Aorta (tissue), 5 donors: ENCODE measurements at regions of chr2 and their contacts with region 1.

Region 1: GRCh38 chr2:38720613-38721241 is 30.4 kb downstream of the SRSF7 start:
- DNase-seq: peak; percentile 76 to 85
- ATAC-seq: peak; percentile 88
- H3K4me3 ChIP-seq: no peak overlapping the region
- H3K27ac ChIP-seq: peak overlapping the region in 1 of 2 donors; percentile 19
- H3K4me1 ChIP-seq: no peaks in the 10 kb centered on the region
- H3K27me3 ChIP-seq: no peaks in the 10 kb centered on the region

Region 2: DNA sequence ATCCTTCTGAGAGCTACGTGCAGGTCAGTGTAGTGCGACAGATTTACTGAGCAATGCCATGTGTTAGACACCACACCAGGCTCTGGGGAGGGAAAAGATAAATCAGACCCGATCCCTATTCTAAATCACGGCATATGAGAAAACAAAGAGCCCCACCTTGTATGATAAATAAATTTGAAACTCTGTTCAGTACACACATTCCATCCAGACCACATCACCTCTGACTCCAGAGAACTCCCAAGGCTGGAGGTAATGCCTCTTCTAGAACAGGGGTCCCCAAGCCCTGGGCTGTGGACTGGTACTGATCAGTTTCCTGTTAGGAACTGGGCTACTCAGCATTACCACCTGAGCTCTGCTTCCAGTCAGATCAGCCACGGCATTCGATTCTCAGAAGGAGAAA is 1299.0 kb before region 1 on chr2:
- intact Hi-C with region 1: no loop called
- DNase-seq: no peak
- ATAC-seq: no peak
- H3K4me3 ChIP-seq: no peak overlapping the region
- H3K27ac ChIP-seq: no peak overlapping the region
- H3K4me1 ChIP-seq: peaks cover 2% of the 10 kb centered on the region in 2 donors
- H3K27me3 ChIP-seq: no peaks in the 10 kb centered on the region

Region 3: GRCh38 chr2:38581193-38582147 is 139.3 kb before region 1 on chr2:
- intact Hi-C with region 1: loop called in 1 of 2 experiments (anchors 5 kb)
- DNase-seq: no peak
- ATAC-seq: peak; percentile 82
- H3K4me3 ChIP-seq: no peak overlapping the region
- H3K27ac ChIP-seq: no peak overlapping the region
- H3K4me1 ChIP-seq: peaks cover 2 to 3% of the 10 kb centered on the region in 2 donors
- H3K27me3 ChIP-seq: no peaks in the 10 kb centered on the region